ENCODE measurements at regions of chr13 and their contacts with region 1.

Region 1: DNA sequence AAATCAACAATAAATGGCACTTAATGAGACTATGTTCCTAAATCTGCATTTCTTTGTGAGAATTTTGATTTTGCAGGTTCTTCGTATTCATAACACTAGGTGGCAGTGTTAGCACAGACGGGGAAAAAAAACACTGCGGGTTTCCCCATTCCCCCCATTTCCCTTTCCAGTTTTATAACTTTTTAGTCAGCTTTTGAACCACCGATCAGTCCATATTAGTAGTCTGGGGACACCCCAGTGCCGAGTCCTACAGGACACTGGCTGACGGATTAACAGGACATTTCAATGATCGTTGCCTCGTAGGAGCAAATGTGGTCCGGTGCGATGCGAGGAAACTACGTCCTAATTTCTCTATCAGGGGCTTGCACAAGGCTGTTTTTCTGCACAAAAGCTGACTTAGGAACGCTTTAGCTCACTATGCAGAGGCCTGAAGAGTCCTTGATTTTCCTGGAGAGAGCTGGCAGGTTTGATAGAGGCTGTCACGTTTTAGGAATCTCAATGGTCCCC is 234.3 kb downstream of the LMO7 start:
- DNase-seq: no peak
- ATAC-seq: peak; percentile 25
- H3K4me3 Mint-ChIP-seq: peak overlapping the region; percentile 51
- H3K27ac Mint-ChIP-seq: peak overlapping the region; percentile 70
- H3K4me1 Mint-ChIP-seq: peaks cover 25% of the 10 kb centered on the region
- H3K27me3 Mint-ChIP-seq: peaks cover 6% of the 10 kb centered on the region

Region 2: GRCh38 chr13:75760131-75761021 is 110.1 kb before region 1 on chr13:
- CTCF ChIA-PET with region 1: interaction called, 32 read pairs
- POLR2A ChIA-PET with region 1: no interaction called
- DNase-seq: peak; percentile 34
- ATAC-seq: peak; percentile 67
- H3K4me3 Mint-ChIP-seq: peak overlapping the region; percentile 56
- H3K27ac Mint-ChIP-seq: peak overlapping the region; percentile 77
- H3K4me1 Mint-ChIP-seq: peaks cover 61% of the 10 kb centered on the region
- H3K27me3 Mint-ChIP-seq: no peaks in the 10 kb centered on the region

Region 3: DNA sequence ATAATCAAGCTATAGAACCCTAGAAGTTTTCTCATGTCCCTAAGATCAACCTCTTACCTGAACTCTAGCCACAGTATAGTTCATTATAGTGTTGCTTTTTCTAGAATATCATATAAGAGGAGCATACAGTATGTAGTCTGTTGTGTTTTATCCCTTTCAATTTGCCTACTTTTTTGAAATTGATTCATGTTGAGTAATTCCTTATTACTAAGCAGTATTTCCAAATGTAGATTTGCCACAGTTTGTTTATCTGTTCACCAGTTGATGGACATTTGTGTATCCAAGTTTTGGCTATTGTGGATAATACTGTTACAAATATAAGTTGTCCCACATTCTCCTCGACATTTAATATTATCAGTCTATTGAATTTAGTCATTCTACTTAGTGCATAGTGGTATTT is 96.3 kb before region 1 on chr13:
- CTCF ChIA-PET with region 1: no interaction called
- POLR2A ChIA-PET with region 1: no interaction called
- DNase-seq: no peak
- ATAC-seq: no peak
- H3K4me3 Mint-ChIP-seq: no peak overlapping the region
- H3K27ac Mint-ChIP-seq: no peak overlapping the region
- H3K4me1 Mint-ChIP-seq: no peaks in the 10 kb centered on the region
- H3K27me3 Mint-ChIP-seq: no peaks in the 10 kb centered on the region

Region 4: GRCh38 chr13:76473552-76474134 is 603.2 kb after region 1 on chr13:
- CTCF ChIA-PET with region 1: interaction called, 17 read pairs
- POLR2A ChIA-PET with region 1: no interaction called
- DNase-seq: peak; percentile 84
- ATAC-seq: peak; percentile 97
- H3K4me3 Mint-ChIP-seq: no peak overlapping the region
- H3K27ac Mint-ChIP-seq: no peak overlapping the region
- H3K4me1 Mint-ChIP-seq: no peaks in the 10 kb centered on the region
- H3K27me3 Mint-ChIP-seq: peaks cover 5% of the 10 kb centered on the region